H1 (cell line): ENCODE measurements at regions of chr2 and their contacts with region 1.

Region 1: GRCh38 chr2:113977660-113978523 is 88.0 kb downstream of the ACTR3 start:
- DNase-seq: no peak
- H3K4me3 ChIP-seq: no peak overlapping the region
- H3K27ac ChIP-seq: no peak overlapping the region
- H3K4me1 ChIP-seq: no peaks in the 10 kb centered on the region
- H3K27me3 ChIP-seq: no peaks in the 10 kb centered on the region; a peak in 1 of 7 replicates
- CTCF ChIP-seq: peak; percentile 1 to 45 (median 38)
- EP300 ChIP-seq: no peak
- POLR2A ChIP-seq: no peak
- RAD21 ChIP-seq: peak; percentile 68 to 73

Region 2: DNA sequence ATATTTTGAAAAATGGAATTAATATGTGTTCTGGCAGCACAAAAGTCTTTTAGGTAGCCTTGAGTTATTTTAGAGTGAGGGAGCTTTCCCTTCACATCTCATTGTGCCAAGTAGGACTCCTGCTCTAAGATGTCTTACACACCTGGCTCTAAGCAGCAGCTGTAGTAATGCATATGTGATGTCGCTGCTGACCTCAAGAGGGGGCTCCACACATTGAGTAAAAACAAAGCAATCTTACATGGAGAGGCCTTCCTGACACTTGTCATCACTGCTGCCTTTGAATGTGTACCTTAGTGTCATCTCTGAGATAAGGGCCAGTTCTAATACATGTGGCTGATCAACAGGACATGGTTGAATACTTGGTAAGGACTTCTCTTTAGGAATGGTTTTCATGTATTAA is 12.2 kb before region 1 on chr2:
- CTCF ChIA-PET with region 1: interaction called, 17 read pairs
- POLR2A ChIA-PET with region 1: no interaction called
- DNase-seq: peak in 1 of 2 experiments; percentile 48
- H3K4me3 ChIP-seq: no peak overlapping the region
- H3K27ac ChIP-seq: no peak overlapping the region
- H3K4me1 ChIP-seq: no peaks in the 10 kb centered on the region
- H3K27me3 ChIP-seq: peaks cover 0 to 1% (median 0%) of the 10 kb centered on the region in 4 experiments; a peak in 1 of 7 replicates
- CTCF ChIP-seq: peak; percentile 18 to 79 (median 64)
- EP300 ChIP-seq: no peak
- POLR2A ChIP-seq: no peak
- RAD21 ChIP-seq: peak; percentile 67 to 80

Region 3: GRCh38 chr2:114550895-114551793 is 573.3 kb after region 1 on chr2:
- CTCF ChIA-PET with region 1: interaction called, 24 read pairs
- POLR2A ChIA-PET with region 1: no interaction called
- DNase-seq: peak; percentile 41 to 66
- H3K4me3 ChIP-seq: no peak overlapping the region
- H3K27ac ChIP-seq: no peak overlapping the region
- H3K4me1 ChIP-seq: peaks cover 0 to 3% (median 1%) of the 10 kb centered on the region in 4 experiments; a peak in 2 of 7 replicates
- H3K27me3 ChIP-seq: no peaks in the 10 kb centered on the region
- CTCF ChIP-seq: peak; percentile 56 to 88 (median 75)
- EP300 ChIP-seq: no peak
- POLR2A ChIP-seq: no peak
- RAD21 ChIP-seq: peak; percentile 94